ENCODE measurements at regions of chr12 and their contacts with region 1.

Region 1: GRCh38 chr12:6873094-6874014 is at the start of gene SPSB2:
- DNase-seq: peak; percentile 95 to 100 (median 98)
- ATAC-seq: peak; percentile 84 to 92 (median 86)
- H3K4me3 ChIP-seq: peak within 1 kb of the TSS; percentile 77 to 94
- H3K4me3 Mint-ChIP-seq: peak within 1 kb of the TSS; percentile 87 to 93 (median 89)
- H3K27ac ChIP-seq: peak within 1 kb of the TSS; percentile 69
- H3K27ac Mint-ChIP-seq: peak within 1 kb of the TSS; percentile 88 to 90
- H3K4me1 ChIP-seq: peaks cover 19 to 56% of the 10 kb centered on the region in 2 experiments
- H3K4me1 Mint-ChIP-seq: peaks cover 46 to 51% (median 48%) of the 10 kb centered on the region in 3 donors
- H3K27me3 ChIP-seq: no peaks in the 10 kb centered on the region
- H3K27me3 Mint-ChIP-seq: no peaks in the 10 kb centered on the region
- total RNA-seq, gene SPSB2: 6.2 to 25.9 (median 21.8) TPM

Region 2: DNA sequence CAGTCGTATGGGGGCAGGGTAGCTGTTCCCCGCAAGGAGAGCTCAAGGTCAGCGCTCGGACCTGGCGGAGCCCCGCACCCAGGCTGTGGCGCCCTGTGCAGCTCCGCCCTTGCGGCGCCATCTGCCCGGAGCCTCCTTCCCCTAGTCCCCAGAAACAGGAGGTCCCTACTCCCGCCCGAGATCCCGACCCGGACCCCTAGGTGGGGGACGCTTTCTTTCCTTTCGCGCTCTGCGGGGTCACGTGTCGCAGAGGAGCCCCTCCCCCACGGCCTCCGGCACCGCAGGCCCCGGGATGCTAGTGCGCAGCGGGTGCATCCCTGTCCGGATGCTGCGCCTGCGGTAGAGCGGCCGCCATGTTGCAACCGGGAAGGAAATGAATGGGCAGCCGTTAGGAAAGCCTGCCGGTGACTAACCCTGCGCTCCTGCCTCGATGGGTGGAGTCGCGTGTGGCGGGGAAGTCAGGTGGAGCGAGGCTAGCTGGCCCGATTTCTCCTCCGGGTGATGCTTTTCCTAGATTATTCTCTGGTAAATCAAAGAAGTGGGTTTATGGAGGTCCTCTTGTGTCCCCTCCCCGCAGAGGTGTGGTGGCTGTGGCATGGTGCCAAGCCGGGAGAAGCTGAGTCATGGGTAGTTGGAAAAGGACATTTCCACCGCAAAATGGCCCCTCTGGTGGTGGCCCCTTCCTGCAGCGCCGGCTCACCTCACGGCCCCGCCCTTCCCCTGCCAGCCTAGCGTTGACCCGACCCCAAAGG is 338.2 kb before region 1 on chr12:
- CTCF ChIA-PET with region 1: no interaction called
- POLR2A ChIA-PET with region 1: no interaction called
- DNase-seq: peak; percentile 29 to 83 (median 55)
- ATAC-seq: peak; percentile 38 to 41 (median 40)
- H3K4me3 ChIP-seq: peak overlapping the region; percentile 90 to 96
- H3K4me3 Mint-ChIP-seq: peak overlapping the region; percentile 90 to 97 (median 94)
- H3K27ac ChIP-seq: peak overlapping the region; percentile 90
- H3K27ac Mint-ChIP-seq: peak overlapping the region; percentile 98
- H3K4me1 ChIP-seq: peaks cover 34 to 69% of the 10 kb centered on the region in 2 experiments
- H3K4me1 Mint-ChIP-seq: peaks cover 55 to 68% (median 59%) of the 10 kb centered on the region in 3 donors
- H3K27me3 ChIP-seq: no peaks in the 10 kb centered on the region
- H3K27me3 Mint-ChIP-seq: no peaks in the 10 kb centered on the region

Region 3: GRCh38 chr12:6752921-6753771 is 120.2 kb before region 1 on chr12 and contains the start of gene MLF2:
- CTCF ChIA-PET with region 1: interaction called in 1 of 2 experiments, 11 read pairs
- POLR2A ChIA-PET with region 1: no interaction called
- DNase-seq: peak; percentile 91 to 98 (median 95)
- ATAC-seq: peak; percentile 90 to 95 (median 94)
- H3K4me3 ChIP-seq: peak within 1 kb of the TSS; percentile 89 to 99
- H3K4me3 Mint-ChIP-seq: peak within 1 kb of the TSS; percentile 88 to 93 (median 91)
- H3K27ac ChIP-seq: peak within 1 kb of the TSS; percentile 99
- H3K27ac Mint-ChIP-seq: peak within 1 kb of the TSS; percentile 92 to 97
- H3K4me1 ChIP-seq: peaks cover 4 to 23% of the 10 kb centered on the region in 2 experiments
- H3K4me1 Mint-ChIP-seq: peaks cover 14 to 24% (median 17%) of the 10 kb centered on the region in 3 donors
- H3K27me3 ChIP-seq: peaks cover 0 to 6% of the 10 kb centered on the region in 2 experiments
- H3K27me3 Mint-ChIP-seq: no peaks in the 10 kb centered on the region
- total RNA-seq, gene MLF2: 83.3 to 125 (median 88.4) TPM

Region 4: DNA sequence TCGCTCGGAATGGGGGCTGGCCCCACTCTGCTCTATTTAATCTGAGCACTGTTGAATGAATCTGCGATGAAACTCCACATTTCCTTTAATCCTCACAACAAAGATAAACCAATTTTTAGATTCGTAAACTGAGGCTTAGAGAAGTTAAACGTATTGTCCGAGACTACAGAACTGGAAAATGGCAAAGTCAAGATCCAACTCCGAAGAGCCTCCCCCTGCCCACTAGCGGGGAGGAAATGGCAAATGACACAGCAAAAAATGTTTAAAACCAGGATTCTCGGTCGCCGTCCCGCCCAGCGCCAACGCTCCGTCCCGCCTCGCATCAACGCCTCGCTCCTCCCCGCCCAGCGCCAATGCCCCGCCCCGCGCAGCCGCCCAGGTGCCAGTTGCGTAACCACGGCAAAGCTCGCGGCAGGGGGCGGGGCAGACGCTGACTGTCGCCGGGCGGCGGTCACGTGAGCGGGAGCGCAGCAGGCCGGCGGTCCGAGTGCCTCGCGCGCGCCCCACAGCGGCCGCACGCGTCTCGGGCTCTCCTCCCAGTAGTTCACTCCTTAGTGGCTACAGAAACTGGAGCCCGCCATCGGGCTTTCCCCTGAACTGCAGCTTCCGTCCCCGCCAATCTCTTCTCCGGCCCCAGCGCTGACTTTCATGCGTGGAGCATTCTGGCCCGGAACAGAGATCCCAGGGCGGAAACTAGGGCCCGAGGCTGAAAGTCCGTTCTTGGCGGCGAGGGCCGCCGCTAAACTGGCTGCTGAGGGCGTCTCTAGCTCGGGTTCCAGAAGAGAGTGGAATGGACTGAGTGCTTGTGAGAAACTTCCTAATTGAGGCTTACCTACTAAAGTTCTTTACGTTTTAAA is 17.7 kb after region 1 on chr12:
- CTCF ChIA-PET with region 1: interaction called in 1 of 2 experiments, 43 read pairs
- POLR2A ChIA-PET with region 1: no interaction called
- DNase-seq: peak; percentile 94 to 100 (median 98)
- ATAC-seq: peak; percentile 93 to 98 (median 96)
- H3K4me3 ChIP-seq: peak overlapping the region; percentile 56 to 71
- H3K4me3 Mint-ChIP-seq: peak overlapping the region; percentile 77 to 80 (median 80)
- H3K27ac ChIP-seq: peak overlapping the region; percentile 90
- H3K27ac Mint-ChIP-seq: peak overlapping the region; percentile 89 to 90
- H3K4me1 ChIP-seq: peaks cover 3 to 16% of the 10 kb centered on the region in 2 experiments
- H3K4me1 Mint-ChIP-seq: peaks cover 13 to 15% (median 13%) of the 10 kb centered on the region in 3 donors
- H3K27me3 ChIP-seq: no peaks in the 10 kb centered on the region
- H3K27me3 Mint-ChIP-seq: no peaks in the 10 kb centered on the region

Region 5: GRCh38 chr12:6937481-6938297 is 64.3 kb after region 1 on chr12:
- CTCF ChIA-PET with region 1: interaction called, 11 to 16 read pairs
- POLR2A ChIA-PET with region 1: interaction called in 1 of 2 experiments, 3 read pairs
- DNase-seq: peak; percentile 80 to 98 (median 92)
- ATAC-seq: peak; percentile 93 to 95 (median 94)
- H3K4me3 ChIP-seq: peak overlapping the region; percentile 62 to 72
- H3K4me3 Mint-ChIP-seq: peak overlapping the region; percentile 76 to 84 (median 83)
- H3K27ac ChIP-seq: peak overlapping the region; percentile 94
- H3K27ac Mint-ChIP-seq: peak overlapping the region; percentile 91 to 93
- H3K4me1 ChIP-seq: peaks cover 17 to 48% of the 10 kb centered on the region in 2 experiments
- H3K4me1 Mint-ChIP-seq: peaks cover 40 to 60% (median 46%) of the 10 kb centered on the region in 3 donors
- H3K27me3 ChIP-seq: no peaks in the 10 kb centered on the region
- H3K27me3 Mint-ChIP-seq: no peaks in the 10 kb centered on the region

Region 6: GRCh38 chr12:7108796-7109571 is 235.6 kb after region 1 on chr12 and contains the start of gene C1RL:
- CTCF ChIA-PET with region 1: interaction called, 15 to 23 read pairs
- POLR2A ChIA-PET with region 1: no interaction called
- DNase-seq: peak in 34 of 35 experiments; percentile 24 to 82 (median 66)
- ATAC-seq: peak; percentile 24 to 53 (median 36)
- H3K4me3 ChIP-seq: peak within 1 kb of the TSS; percentile 77 to 88
- H3K4me3 Mint-ChIP-seq: peak within 1 kb of the TSS; percentile 89 to 93 (median 89)
- H3K27ac ChIP-seq: peak within 1 kb of the TSS; percentile 75
- H3K27ac Mint-ChIP-seq: peak within 1 kb of the TSS; percentile 96
- H3K4me1 ChIP-seq: peaks cover 8 to 33% of the 10 kb centered on the region in 2 experiments
- H3K4me1 Mint-ChIP-seq: peaks cover 43 to 49% (median 47%) of the 10 kb centered on the region in 3 donors
- H3K27me3 ChIP-seq: no peaks in the 10 kb centered on the region
- H3K27me3 Mint-ChIP-seq: no peaks in the 10 kb centered on the region
- total RNA-seq, gene C1RL: 18.1 to 36.6 (median 30.8) TPM

Measured in T-cell (primary cell).